ENCODE measurements at regions of chr1 and their contacts with region 1.

Region 1: GRCh38 chr1:28886731-28887418 is 27.5 kb upstream of the EPB41 start:
- DNase-seq: peak; percentile 70 to 98
- H3K4me3 ChIP-seq: peak overlapping the region; percentile 76 to 88 (median 76)
- H3K27ac ChIP-seq: no peak overlapping the region
- H3K4me1 ChIP-seq: peaks cover 18 to 27% (median 22%) of the 10 kb centered on the region in 4 experiments
- H3K27me3 ChIP-seq: peaks cover 0 to 11% (median 6%) of the 10 kb centered on the region in 4 experiments; a peak in 4 of 7 replicates
- CTCF ChIP-seq: no peak; a peak in 1 of 4 replicates
- EP300 ChIP-seq: no peak
- POLR2A ChIP-seq: no peak
- RAD21 ChIP-seq: no peak

Region 2: DNA sequence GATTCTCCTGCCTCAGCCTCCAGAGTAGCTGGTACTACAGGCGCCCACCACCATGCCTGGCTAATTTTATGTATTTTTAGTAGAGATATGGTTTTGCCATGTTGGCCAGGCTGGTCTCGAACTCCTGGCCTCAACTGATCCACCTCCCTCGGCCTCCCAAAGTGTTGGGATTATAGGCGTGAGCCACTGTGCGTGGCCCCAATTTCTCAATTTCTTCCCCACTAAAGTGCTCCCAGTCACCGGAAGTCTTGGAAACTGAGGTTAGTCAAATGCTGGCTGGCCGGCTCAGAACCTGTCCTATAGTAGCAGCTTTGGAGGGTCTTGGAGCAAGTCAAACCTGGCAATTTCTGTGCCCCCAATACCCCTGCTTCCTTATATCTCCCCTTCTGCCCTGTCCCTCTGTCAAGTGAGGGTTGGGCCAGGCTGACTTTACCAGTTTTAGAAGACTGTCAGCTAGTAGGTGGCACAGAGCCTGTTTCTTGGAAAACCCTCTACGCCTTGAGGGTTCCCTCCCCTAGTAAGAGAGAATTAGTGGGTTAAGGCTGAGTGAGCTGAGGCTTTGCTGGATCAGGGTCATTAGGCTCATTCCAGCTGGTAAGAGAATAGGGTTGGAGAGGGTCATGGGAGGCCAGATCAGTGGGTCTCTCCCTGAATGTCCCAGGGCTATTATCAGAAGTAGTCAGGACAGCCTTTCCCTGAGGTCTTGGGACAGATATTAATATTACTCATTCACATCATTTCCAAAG is 19.2 kb after region 1 on chr1:
- CTCF ChIA-PET with region 1: interaction called, 10 read pairs
- POLR2A ChIA-PET with region 1: interaction called, 4 read pairs
- DNase-seq: no peak
- H3K4me3 ChIP-seq: no peak overlapping the region
- H3K27ac ChIP-seq: no peak overlapping the region
- H3K4me1 ChIP-seq: no peaks in the 10 kb centered on the region
- H3K27me3 ChIP-seq: no peaks in the 10 kb centered on the region
- CTCF ChIP-seq: no peak
- EP300 ChIP-seq: no peak
- POLR2A ChIP-seq: no peak
- RAD21 ChIP-seq: no peak

Region 3: GRCh38 chr1:28983509-28984310 is 96.8 kb after region 1 on chr1:
- CTCF ChIA-PET with region 1: interaction called, 10 read pairs
- POLR2A ChIA-PET with region 1: no interaction called
- DNase-seq: peak in 1 of 2 experiments; percentile 58
- H3K4me3 ChIP-seq: no peak overlapping the region
- H3K27ac ChIP-seq: 0 out of 2 replicates have a peak overlapping the region, but pooled peaks have one; percentile 46
- H3K4me1 ChIP-seq: peaks cover 2 to 7% (median 5%) of the 10 kb centered on the region in 4 experiments
- H3K27me3 ChIP-seq: no peaks in the 10 kb centered on the region
- CTCF ChIP-seq: peak; percentile 35 to 53 (median 51)
- EP300 ChIP-seq: no peak
- POLR2A ChIP-seq: no peak
- RAD21 ChIP-seq: peak; percentile 39 to 50

Region 4: GRCh38 chr1:29043274-29043965 is 156.5 kb after region 1 on chr1:
- CTCF ChIA-PET with region 1: interaction called, 13 read pairs
- POLR2A ChIA-PET with region 1: interaction called, 5 read pairs
- DNase-seq: no peak
- H3K4me3 ChIP-seq: no peak overlapping the region
- H3K27ac ChIP-seq: no peak overlapping the region
- H3K4me1 ChIP-seq: no peaks in the 10 kb centered on the region
- H3K27me3 ChIP-seq: no peaks in the 10 kb centered on the region
- CTCF ChIP-seq: no peak
- EP300 ChIP-seq: no peak
- POLR2A ChIP-seq: no peak
- RAD21 ChIP-seq: no peak

Region 5: GRCh38 chr1:29124366-29125236 is 237.7 kb after region 1 on chr1:
- CTCF ChIA-PET with region 1: interaction called, 12 read pairs
- POLR2A ChIA-PET with region 1: interaction called, 7 read pairs
- DNase-seq: peak; percentile 66 to 93
- H3K4me3 ChIP-seq: peak overlapping the region; percentile 51 to 91 (median 61)
- H3K27ac ChIP-seq: peak overlapping the region; percentile 48; the same call in 1 of the 2 replicates
- H3K4me1 ChIP-seq: peaks cover 0 to 19% (median 9%) of the 10 kb centered on the region in 4 experiments; a peak in 6 of 7 replicates
- H3K27me3 ChIP-seq: peaks cover 0 to 42% (median 25%) of the 10 kb centered on the region in 4 experiments; a peak in 6 of 7 replicates
- CTCF ChIP-seq: peak in 2 of 3 experiments; percentile 42 to 77; a peak in 3 of 4 replicates
- EP300 ChIP-seq: peak; percentile 36 to 82; a peak in 2 of 3 replicates
- POLR2A ChIP-seq: no peak; a peak in 1 of 3 replicates
- RAD21 ChIP-seq: peak in 1 of 2 experiments; percentile 23; a peak in 2 of 4 replicates

Region 6: GRCh38 chr1:29202584-29203340 is 315.9 kb after region 1 on chr1:
- CTCF ChIA-PET with region 1: interaction called, 13 read pairs
- POLR2A ChIA-PET with region 1: interaction called, 4 read pairs
- DNase-seq: peak; percentile 90 to 99
- H3K4me3 ChIP-seq: no peak overlapping the region
- H3K27ac ChIP-seq: no peak overlapping the region
- H3K4me1 ChIP-seq: peaks cover 0 to 6% (median 2%) of the 10 kb centered on the region in 4 experiments; a peak in 2 of 7 replicates
- H3K27me3 ChIP-seq: no peaks in the 10 kb centered on the region
- CTCF ChIP-seq: peak; percentile 92 to 99 (median 94)
- EP300 ChIP-seq: no peak
- POLR2A ChIP-seq: no peak
- RAD21 ChIP-seq: peak; percentile 97 to 99